Activated CD4-positive, alpha-beta T cell treated with anti-CD3 and anti-CD28 coated beads for 36 hours (primary cell): ENCODE measurements at regions of chr12 and their contacts with region 1.

Region 1: DNA sequence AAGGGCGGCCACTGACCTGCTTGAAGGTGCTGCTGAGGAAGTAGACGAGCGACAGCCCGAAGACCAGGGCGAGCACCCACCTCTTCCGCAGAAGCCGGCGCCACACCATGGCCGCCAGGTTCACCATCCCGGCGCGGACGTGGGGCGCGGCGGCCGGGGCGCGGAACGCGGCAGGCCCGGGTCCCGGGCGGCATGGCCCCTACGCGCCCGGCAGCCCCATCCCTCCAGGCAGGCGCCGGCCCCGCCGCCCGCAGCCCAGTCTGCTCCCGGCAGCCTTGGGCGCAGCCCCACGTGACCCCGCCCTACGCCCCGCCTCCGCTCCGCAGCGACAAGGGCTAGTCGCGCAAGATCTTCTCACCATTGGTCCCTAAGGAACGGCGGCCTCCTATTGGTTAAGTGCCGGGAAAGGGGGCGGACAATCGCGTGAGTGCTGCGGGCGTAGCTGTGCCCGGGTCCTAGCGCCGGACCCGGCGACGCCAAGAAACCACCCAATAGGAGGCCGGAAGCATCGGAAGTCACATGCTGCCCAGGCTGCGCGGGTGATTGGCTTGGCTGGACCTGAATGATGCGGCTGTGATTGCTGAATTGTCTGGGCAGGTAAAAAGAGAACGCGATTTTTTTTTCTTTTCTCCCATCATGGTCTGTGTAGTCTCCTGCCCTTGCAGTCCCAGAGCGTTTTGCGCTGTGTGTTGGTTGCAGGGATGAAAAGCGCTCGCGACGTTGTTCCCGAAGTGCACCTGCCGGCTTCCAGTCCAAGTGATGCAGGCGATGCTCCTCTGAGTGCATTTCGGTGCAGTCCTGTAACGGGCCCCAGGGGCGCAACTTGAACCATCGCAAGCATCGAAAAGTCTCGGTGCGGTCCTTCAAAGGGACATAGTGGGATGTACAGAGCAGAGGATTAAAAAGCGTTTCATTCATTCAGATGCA is at the starts of genes RNFT2 and SPRING1:
- DNase-seq: peak; percentile 99
- ATAC-seq: peak; percentile 99
- H3K4me3 Mint-ChIP-seq: peak within 1 kb of the TSS; percentile 85
- H3K27ac Mint-ChIP-seq: peak within 1 kb of the TSS; percentile 61
- H3K4me1 Mint-ChIP-seq: peaks cover 22% of the 10 kb centered on the region
- H3K27me3 Mint-ChIP-seq: no peaks in the 10 kb centered on the region
- total RNA-seq, gene RNFT2: 14.7 to 15.0 TPM
- total RNA-seq, gene SPRING1: 15.3 to 17.4 TPM

Region 2: DNA sequence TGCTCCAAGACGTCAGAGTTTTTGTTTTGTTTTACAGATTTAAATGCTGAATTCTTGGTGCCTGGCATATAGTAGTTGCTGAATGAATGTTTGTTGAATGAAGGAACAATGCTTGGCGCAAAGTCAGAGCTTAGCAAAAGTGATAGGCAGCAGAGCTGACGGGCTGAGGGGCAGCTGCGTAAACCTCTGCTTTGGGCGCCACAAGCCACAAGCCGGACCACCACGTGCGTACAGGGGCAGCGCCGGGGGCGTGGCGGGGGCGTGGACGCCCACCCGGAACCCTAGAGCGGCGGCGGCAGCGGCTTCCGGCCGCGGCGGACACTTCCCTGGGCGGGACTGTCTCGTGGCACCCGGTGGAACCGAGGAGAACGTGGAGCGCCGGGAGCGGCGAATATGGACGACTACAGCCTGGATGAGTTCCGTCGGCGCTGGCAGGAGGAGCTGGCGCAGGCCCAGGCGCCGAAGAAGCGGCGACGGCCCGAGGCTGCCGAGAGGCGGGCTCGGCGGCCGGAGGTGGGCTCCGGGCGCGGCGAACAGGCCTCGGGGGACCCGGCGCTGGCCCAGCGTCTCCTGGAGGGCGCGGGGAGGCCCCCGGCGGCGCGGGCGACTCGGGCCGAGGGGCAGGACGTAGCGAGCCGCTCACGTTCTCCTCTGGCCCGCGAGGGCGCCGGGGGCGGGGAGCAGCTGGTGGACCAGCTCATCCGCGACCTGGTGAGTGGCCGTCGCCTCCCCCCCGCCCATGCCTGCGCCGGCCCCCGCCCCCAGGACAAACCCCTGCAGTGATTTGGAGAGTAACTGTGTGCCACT is 172.8 kb after region 1 on chr12 and contains the start of gene FBXW8:
- CTCF ChIA-PET with region 1: no interaction called
- POLR2A ChIA-PET with region 1: no interaction called
- intact Hi-C with region 1: loop called in 1 of 2 experiments (anchors 1 kb)
- DNase-seq: peak; percentile 69
- ATAC-seq: peak; percentile 80
- H3K4me3 Mint-ChIP-seq: peak within 1 kb of the TSS; percentile 79
- H3K27ac Mint-ChIP-seq: peak within 1 kb of the TSS; percentile 88
- H3K4me1 Mint-ChIP-seq: peaks cover 26% of the 10 kb centered on the region
- H3K27me3 Mint-ChIP-seq: peaks cover 1% of the 10 kb centered on the region
- total RNA-seq, gene FBXW8: 5.7 to 6.1 TPM

Region 3: DNA sequence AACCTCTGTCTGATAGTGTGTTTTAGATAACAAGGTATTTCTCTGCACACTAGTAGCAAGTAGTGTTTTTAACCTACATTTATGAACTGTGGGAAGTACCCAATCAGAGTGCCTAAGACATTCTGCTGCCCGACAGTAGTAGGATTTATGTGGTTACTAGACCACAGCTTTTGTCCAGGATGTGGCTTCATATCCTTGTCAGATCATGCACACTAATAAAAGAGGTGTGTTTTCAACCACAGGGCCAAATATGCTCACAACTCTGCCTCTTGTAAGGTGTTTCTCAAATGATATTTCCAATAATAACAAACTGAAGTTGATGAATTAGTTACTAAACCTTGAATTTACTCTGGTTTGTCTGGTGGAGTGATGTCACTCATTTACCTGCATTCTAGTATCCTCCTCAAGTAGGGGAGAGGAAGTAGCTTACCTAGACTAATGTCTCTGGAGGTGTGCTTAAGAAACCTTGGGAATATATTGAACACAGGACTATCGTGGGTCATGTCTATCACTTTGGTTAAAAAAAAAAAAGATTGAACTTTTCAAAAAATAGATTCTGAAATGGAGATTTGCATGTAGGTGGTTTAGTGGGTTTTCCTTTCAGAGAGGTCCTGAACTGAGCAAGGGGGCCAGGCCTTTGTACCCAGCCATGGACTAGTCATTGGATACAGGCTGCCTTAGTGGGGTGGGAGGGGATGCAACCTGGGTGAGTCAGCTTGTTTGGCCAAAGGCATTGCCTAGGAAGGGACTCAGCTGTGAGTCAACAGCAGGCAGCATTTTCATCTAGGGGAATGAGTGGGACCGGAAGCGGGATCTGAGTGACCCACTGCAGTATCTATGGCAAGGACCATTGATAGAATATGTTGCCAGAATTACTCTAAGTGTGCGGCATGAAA is 186.8 kb after region 1 on chr12:
- CTCF ChIA-PET with region 1: no interaction called
- POLR2A ChIA-PET with region 1: no interaction called
- intact Hi-C with region 1: loop called (anchors 1 to 5 kb)
- DNase-seq: peak; percentile 67
- ATAC-seq: peak; percentile 75
- H3K4me3 Mint-ChIP-seq: no peak overlapping the region
- H3K27ac Mint-ChIP-seq: peak overlapping the region; percentile 76
- H3K4me1 Mint-ChIP-seq: peaks cover 68% of the 10 kb centered on the region
- H3K27me3 Mint-ChIP-seq: peaks cover 12% of the 10 kb centered on the region

Region 4: GRCh38 chr12:116955382-116956021 is 217.5 kb after region 1 on chr12:
- CTCF ChIA-PET with region 1: no interaction called
- POLR2A ChIA-PET with region 1: no interaction called
- intact Hi-C with region 1: loop called (anchors 1 to 10 kb)
- DNase-seq: peak; percentile 14
- ATAC-seq: no peak
- H3K4me3 Mint-ChIP-seq: no peak overlapping the region
- H3K27ac Mint-ChIP-seq: no peak overlapping the region
- H3K4me1 Mint-ChIP-seq: peaks cover 21% of the 10 kb centered on the region
- H3K27me3 Mint-ChIP-seq: no peaks in the 10 kb centered on the region

Region 5: DNA sequence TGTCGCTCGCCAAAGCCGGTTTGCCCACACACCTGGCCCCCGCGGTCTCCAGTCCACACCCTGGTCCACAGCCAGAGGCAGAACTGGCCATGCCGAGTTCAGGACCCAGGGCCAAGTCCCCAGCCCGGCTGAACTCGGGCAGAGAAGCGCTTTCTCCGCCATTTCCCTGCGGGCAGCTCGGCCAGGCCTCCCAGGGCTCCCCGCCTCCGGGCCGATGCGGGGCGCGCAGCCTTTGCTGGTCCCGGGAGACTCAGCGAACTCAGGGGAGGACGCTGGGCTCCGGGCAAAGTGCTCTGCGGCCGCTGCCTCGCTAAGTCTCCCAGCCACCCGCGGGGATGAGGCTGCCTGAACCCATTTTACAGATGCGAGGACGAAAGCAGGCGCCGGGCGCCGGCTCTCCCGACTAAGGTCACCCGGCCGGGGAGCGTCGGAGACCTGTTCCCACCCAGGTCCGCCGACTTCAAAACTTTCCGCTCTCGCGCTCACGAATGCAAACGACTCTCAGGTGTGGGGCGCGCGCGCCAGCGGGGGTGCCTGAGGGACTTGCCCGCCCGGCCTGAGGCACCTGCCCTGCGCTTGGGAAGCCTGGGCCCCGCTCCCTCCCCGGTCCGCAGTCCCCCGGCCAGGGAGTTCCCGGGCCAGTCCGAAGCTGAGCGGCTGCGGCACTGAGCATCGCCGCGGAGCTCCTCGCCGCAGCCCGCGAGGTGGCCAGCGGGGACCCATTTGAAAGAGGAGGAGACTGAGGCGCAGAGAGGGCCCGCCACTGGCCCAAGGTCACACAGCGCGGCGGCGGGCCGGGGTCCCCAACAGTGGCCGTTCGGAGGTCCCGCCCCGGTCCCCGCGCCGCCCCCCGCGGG is 360.6 kb after region 1 on chr12:
- CTCF ChIA-PET with region 1: no interaction called
- POLR2A ChIA-PET with region 1: no interaction called
- intact Hi-C with region 1: loop called in 1 of 2 experiments (anchors 1 kb)
- DNase-seq: peak; percentile 63
- ATAC-seq: peak; percentile 25
- H3K4me3 Mint-ChIP-seq: peak overlapping the region; percentile 71
- H3K27ac Mint-ChIP-seq: no peak overlapping the region
- H3K4me1 Mint-ChIP-seq: peaks cover 18% of the 10 kb centered on the region
- H3K27me3 Mint-ChIP-seq: peaks cover 15% of the 10 kb centered on the region

Region 6: GRCh38 chr12:117190210-117190781 is 452.3 kb after region 1 on chr12 and contains the start of gene FBXO21:
- CTCF ChIA-PET with region 1: no interaction called
- POLR2A ChIA-PET with region 1: no interaction called
- intact Hi-C with region 1: loop called (anchors 1 to 2 kb)
- DNase-seq: peak; percentile 96
- ATAC-seq: peak; percentile 97
- H3K4me3 Mint-ChIP-seq: peak within 1 kb of the TSS; percentile 95
- H3K27ac Mint-ChIP-seq: peak within 1 kb of the TSS; percentile 90
- H3K4me1 Mint-ChIP-seq: peaks cover 27% of the 10 kb centered on the region
- H3K27me3 Mint-ChIP-seq: no peaks in the 10 kb centered on the region
- total RNA-seq, gene FBXO21: 22.8 to 28.2 TPM